ENCODE measurements at regions of chr3 and their contacts with region 1.

Region 1: DNA sequence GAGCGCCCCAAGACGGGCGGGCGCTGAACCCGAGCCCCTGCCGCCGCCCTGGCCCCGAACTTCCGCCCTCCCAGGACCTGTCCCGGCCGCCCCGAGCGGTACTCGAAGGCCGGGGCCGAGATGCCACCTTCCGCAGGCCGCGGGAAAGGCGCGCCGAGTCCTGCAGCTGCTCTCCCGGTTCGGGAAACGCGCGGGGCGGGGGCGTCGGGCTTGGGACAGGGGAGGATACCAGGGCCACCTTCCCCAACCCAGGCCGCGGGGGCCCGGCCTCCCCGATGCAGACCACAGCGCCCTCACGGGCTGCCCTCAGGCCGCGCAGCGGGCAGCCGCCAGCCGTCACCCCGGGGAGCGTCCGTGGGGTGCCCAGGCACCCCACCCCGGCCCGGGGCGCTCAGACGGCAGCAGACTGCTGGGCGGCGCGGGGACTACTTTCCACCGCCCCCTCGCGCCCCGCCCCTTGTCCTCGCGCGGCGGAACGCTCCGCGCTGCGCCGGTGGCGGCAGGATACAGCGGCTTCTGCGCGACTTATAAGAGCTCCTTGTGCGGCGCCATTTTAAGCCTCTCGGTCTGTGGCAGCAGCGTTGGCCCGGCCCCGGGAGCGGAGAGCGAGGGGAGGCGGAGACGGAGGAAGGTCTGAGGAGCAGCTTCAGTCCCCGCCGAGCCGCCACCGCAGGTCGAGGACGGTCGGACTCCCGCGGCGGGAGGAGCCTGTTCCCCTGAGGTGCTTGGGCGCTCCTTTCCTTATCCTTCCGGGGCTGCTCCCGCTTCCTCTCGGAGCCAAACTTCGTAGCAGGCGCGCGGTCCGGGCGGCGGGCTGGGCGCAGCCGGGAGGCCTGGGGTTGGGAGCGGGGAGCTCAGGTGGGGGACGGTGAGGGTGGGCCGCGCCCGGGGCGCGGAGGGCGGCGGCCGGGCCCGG is at the start of gene CTNNB1:
- DNase-seq: peak; percentile 92 to 98 (median 97)
- ATAC-seq: peak; percentile 95 to 96
- H3K4me3 ChIP-seq: peak within 1 kb of the TSS; percentile 93
- H3K27ac ChIP-seq: peak within 1 kb of the TSS; percentile 95
- H3K4me1 ChIP-seq: no peaks in the 10 kb centered on the region
- H3K27me3 ChIP-seq: no peaks in the 10 kb centered on the region
- total RNA-seq, gene CTNNB1: 154 to 263 (median 180) TPM

Region 2: DNA sequence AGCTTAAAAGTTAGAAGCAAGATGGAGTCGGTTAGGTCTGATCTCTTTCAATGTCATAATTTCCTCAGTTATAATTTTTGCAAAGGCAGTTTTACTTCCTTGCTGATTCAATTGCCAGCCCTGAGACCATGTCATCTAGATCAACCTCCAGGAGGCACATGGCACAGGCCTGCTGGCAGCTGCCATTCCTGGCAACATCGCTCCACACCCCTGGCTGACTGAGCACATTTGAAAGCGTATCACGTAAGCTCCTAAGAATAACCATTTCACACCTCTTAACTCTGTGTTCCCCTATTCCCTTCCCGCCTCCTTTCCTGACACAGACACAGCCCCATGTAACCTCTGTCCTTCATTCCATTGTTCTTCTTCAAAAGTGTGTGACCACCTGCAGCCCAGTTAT is 313.8 kb before region 1 on chr3:
- intact Hi-C with region 1: loop called in 1 of 4 experiments (anchors 10 kb)
- DNase-seq: peak in 1 of 3 donors; percentile 64
- ATAC-seq: peak; percentile 62 to 71
- H3K4me3 ChIP-seq: no peak overlapping the region
- H3K27ac ChIP-seq: no peak overlapping the region
- H3K4me1 ChIP-seq: no peaks in the 10 kb centered on the region
- H3K27me3 ChIP-seq: no peaks in the 10 kb centered on the region

Region 3: GRCh38 chr3:40971191-40972168 is 227.7 kb before region 1 on chr3:
- intact Hi-C with region 1: no loop called
- DNase-seq: peak; percentile 72 to 82 (median 79)
- ATAC-seq: peak; percentile 91 to 95
- H3K4me3 ChIP-seq: no peak overlapping the region
- H3K27ac ChIP-seq: peak overlapping the region; percentile 88
- H3K4me1 ChIP-seq: peaks cover 24% of the 10 kb centered on the region
- H3K27me3 ChIP-seq: no peaks in the 10 kb centered on the region

Region 4: DNA sequence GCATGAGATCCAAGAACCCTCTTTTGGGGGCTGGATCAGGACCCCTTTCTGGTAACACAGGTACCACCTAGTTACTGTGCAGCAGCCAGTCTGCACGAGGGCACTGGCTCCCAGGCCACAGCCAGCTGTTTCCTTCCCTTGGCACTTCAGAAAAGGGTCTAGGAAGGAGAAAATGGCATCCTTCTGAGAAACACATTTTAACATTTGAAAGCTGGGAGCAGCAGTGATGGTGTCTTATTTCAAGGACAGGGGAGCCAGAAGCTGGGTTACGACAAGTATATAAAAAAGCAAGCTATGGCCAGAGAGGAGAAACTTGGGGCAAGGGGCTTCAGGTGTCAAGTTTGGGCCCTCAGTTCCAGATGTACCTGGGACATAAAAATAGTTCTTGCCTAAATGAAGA is 282.9 kb after region 1 on chr3:
- intact Hi-C with region 1: no loop called
- DNase-seq: no peak
- ATAC-seq: no peak
- H3K4me3 ChIP-seq: no peak overlapping the region
- H3K27ac ChIP-seq: no peak overlapping the region
- H3K4me1 ChIP-seq: no peaks in the 10 kb centered on the region
- H3K27me3 ChIP-seq: no peaks in the 10 kb centered on the region